Common myeloid progenitor, CD34-positive (primary cell): ENCODE measurements at regions of chr10 and their contacts with region 1.

Region 1: DNA sequence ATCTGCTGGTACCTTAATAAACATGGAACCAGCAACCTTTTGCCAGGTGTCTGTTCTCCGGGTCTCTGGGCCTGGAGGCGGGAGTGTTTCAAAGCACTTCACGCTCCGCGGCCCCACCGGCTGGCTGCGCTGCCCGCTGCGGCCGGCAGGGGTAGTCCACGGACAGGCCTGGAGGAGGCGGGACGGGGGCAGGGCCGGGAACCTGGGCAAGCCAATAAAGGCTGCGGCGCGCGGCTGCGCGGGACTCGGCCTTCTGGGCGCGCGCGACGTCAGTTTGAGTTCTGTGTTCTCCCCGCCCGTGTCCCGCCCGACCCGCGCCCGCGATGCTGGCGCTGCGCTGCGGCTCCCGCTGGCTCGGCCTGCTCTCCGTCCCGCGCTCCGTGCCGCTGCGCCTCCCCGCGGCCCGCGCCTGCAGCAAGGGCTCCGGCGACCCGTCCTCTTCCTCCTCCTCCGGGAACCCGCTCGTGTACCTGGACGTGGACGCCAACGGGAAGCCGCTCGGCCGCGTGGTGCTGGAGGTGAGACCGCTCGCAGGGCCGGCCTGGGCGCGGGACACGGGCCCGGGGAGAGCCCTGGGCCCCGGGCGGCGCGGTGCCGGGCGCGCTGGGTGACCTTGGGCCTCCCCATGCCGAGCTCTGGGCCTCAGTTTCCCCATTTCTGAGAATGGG is at the start of gene PPIF:
- DNase-seq: peak; percentile 92 to 93 (median 93)
- H3K4me3 ChIP-seq: peak within 1 kb of the TSS; percentile 25 to 87 (median 69)
- H3K27ac ChIP-seq: peak within 1 kb of the TSS; percentile 40 to 73
- H3K4me1 ChIP-seq: peaks cover 5 to 67% (median 23%) of the 10 kb centered on the region in 4 experiments
- H3K27me3 ChIP-seq: no peaks in the 10 kb centered on the region

Region 2: GRCh38 chr10:79316671-79317431 is 30.5 kb before region 1 on chr10:
- CTCF ChIA-PET with region 1: interaction called, 44 read pairs
- POLR2A ChIA-PET with region 1: interaction called, 7 read pairs
- DNase-seq: peak; percentile 27 to 72 (median 62)
- H3K4me3 ChIP-seq: peak overlapping the region in 4 of 7 experiments; percentile 8 to 46 (median 12)
- H3K27ac ChIP-seq: no peak overlapping the region
- H3K4me1 ChIP-seq: peaks cover 21 to 72% (median 55%) of the 10 kb centered on the region in 4 experiments
- H3K27me3 ChIP-seq: no peaks in the 10 kb centered on the region

Region 3: DNA sequence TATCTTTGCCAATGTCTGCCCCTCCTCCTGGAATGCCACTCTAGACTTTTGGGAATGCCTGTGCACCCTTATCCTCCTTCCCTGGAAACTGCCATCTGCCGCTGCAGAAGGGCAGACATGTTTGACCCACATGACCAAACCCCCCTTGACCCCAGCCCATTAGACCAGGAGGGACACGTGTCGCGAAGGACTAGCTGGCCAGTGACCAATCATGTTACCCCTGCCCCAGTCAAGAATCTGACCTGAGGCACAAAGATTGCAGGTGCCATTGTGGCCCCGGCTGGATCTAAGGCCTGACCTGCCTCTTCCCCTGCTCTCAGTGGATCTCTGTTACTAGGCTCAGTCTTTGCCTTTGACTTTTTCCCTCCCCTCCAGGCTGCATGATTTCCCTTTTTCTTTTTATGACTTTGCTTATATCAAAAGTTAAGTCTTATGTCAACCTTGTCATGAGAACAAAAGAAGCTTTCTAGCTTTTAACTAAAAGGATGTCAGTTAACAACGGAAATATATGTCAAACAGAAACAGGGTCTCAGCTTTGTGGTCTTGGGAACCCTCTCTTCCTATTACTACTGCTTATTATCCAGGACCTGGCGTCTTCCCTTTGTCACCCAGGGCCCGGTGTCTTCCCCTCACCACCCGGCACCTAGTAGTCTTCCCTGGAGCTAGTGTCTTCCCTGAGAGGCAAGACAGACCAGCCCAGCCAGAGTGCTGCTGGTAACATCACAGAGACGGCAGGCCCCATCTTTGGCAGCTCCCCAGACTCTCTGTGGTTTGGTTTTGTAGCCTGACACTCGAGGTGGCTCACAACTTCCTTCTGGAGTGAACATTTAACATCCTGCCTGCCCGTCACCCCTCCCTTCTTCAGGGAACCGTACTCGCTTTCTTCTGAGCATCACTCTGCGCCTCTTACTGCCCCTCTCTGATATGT is 24.5 kb before region 1 on chr10:
- CTCF ChIA-PET with region 1: interaction called, 44 read pairs
- POLR2A ChIA-PET with region 1: interaction called, 7 read pairs
- DNase-seq: peak; percentile 88 to 95 (median 95)
- H3K4me3 ChIP-seq: peak overlapping the region in 4 of 7 experiments; percentile 20 to 39 (median 28)
- H3K27ac ChIP-seq: peak overlapping the region; percentile 36 to 55
- H3K4me1 ChIP-seq: peaks cover 38 to 73% (median 66%) of the 10 kb centered on the region in 4 experiments
- H3K27me3 ChIP-seq: no peaks in the 10 kb centered on the region

Region 4: DNA sequence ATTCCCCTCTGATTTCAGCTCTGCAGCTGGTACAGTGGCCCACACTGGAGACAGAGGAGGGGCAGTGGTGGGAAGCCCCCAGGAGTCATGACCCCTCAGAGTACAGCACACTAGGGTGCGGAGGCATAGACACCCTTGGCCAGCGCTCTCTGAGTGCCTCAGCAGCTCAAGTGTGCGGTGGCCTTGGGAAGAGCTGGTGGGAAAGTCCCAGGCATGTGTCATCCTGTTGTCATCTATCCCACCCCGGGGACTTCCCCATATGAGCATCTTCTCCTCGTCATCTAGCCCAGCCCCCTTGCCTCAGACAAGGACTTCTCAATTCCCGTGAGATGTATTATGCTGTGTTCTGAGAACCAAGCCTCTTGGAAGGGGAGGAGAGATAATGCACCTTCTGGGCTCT is 15.7 kb before region 1 on chr10:
- CTCF ChIA-PET with region 1: interaction called, 46 read pairs
- POLR2A ChIA-PET with region 1: no interaction called
- DNase-seq: peak; percentile 70 to 93 (median 84)
- H3K4me3 ChIP-seq: no peak overlapping the region
- H3K27ac ChIP-seq: no peak overlapping the region
- H3K4me1 ChIP-seq: peaks cover 0 to 5% (median 0%) of the 10 kb centered on the region in 4 experiments
- H3K27me3 ChIP-seq: no peaks in the 10 kb centered on the region